Naive thymus-derived CD4-positive, alpha-beta T cell (primary cell): ENCODE measurements at regions of chr19 and their contacts with region 1.

Region 1: GRCh38 chr19:1189419-1189818 is 15.4 kb upstream of the SBNO2 start:
- DNase-seq: peak in 1 of 9 donors; percentile 67
- ATAC-seq: peak; percentile 57
- H3K4me3 ChIP-seq: no peak overlapping the region
- H3K4me3 Mint-ChIP-seq: peak overlapping the region in 5 of 10 donors; percentile 33 to 63 (median 58)
- H3K27ac ChIP-seq: no peak overlapping the region
- H3K27ac Mint-ChIP-seq: peak overlapping the region; percentile 44 to 94 (median 79)
- H3K4me1 ChIP-seq: peaks cover 21 to 25% of the 10 kb centered on the region in 2 donors
- H3K4me1 Mint-ChIP-seq: peaks cover 11 to 27% (median 18%) of the 10 kb centered on the region in 7 donors
- H3K27me3 ChIP-seq: no peaks in the 10 kb centered on the region
- H3K27me3 Mint-ChIP-seq: no peaks in the 10 kb centered on the region

Region 2: DNA sequence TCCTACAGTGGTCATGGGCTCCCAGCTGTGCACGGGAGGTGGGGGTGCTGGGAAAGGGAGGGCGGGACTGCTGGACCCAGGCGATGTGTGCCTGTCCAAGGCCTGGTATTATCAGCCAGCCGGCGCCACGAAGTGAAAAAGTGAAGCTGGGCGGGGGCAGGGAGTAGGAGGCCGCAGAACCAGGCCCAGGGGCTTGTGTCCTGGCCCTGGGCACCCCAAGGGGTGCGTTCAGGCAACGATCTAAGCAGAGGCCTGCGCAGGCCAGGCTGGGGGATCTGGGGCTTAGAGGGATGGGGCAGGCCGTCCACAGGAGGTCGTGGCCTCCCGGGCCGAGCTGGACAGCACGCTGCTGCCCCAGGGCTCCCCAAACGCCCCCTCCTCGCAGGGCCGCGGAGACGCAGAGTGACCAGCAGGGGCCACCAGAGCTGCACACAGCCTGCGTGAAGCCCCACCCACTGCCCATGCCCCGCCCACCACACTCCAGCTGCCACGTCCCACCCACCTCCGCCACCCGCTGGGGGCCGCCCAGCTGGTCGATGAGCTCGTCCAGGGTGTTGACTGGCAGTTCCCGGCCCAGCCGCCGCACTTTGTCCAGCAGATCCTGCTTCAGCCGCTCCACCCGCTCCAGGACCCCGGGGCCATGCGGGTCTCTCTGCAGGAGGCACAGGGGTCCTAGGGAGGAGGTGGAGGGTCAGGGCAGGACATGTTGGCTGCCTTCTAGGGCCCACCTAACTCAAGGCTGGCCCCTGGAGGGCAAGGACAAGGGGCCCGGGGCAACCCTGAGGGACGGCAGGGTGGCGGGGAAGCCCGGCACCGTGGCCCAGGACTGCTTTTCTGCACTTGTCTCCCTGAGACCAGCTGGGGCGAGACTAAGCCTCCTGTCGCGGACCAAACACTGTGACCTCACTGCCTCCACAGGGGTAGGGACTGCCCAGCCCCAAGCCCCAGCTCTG is 76.1 kb before region 1 on chr19:
- CTCF ChIA-PET with region 1: interaction called, 37 read pairs
- POLR2A ChIA-PET with region 1: interaction called, 27 read pairs
- intact Hi-C with region 1: loop called (anchors 5 kb)
- DNase-seq: peak; percentile 73 to 86 (median 83)
- ATAC-seq: peak; percentile 94
- H3K4me3 ChIP-seq: no peak overlapping the region
- H3K4me3 Mint-ChIP-seq: no peak overlapping the region
- H3K27ac ChIP-seq: peak overlapping the region; percentile 59
- H3K27ac Mint-ChIP-seq: peak overlapping the region in 3 of 9 donors; percentile 36 to 77 (median 74)
- H3K4me1 ChIP-seq: peaks cover 0 to 8% of the 10 kb centered on the region in 2 donors
- H3K4me1 Mint-ChIP-seq: peaks cover 0 to 2% (median 0%) of the 10 kb centered on the region in 7 donors
- H3K27me3 ChIP-seq: no peaks in the 10 kb centered on the region
- H3K27me3 Mint-ChIP-seq: no peaks in the 10 kb centered on the region

Region 3: DNA sequence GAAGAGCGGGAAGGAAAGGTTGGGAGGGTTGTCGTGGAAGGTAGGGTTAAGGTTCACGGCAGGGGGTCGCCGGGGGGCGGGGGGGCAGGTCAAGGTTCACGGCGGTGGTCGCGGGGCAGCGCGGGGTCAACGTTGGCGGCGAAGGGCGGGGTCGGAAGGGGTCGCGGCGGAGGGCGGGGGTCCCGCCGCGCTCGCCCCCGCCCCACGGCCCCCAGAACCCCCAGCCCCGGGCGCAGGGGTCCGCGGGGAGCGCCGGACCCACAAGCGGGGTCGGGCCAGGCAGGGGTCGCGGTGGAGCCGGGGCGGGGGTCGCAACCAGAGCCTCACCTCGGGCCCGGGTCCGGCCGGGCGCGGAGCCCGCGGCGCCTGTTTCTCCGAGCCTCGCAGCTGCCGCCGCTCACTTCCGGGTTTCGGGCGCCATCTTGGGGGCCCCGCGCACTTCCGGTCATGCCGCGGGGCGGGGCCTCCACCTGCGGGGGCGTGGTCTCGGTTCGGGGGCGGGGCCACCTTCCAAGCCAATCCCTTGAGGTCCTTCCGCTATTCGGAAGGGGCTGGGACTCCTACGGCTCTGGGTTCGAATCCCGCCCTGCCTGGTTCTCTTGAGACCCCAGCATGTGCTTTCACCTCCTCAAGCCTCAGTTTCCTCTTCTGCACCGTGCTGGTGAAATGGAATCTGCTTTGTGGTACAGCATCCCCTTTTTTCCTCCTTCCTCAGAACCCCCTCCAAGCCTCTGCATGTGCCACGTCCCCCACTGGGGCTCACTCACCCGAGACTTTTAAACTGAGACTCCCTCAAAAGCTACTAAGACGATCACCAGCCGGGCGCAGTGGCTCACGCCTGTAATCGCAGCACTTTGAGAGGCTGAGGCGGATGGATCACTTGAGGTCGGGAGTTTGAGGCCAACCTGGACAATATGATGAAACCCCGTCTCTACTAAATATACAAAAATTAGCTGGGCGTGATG is 15.3 kb before region 1 on chr19 and contains the start of gene SBNO2:
- CTCF ChIA-PET with region 1: interaction called, 6 read pairs
- POLR2A ChIA-PET with region 1: interaction called, 14 read pairs
- intact Hi-C with region 1: loop called in 1 of 2 experiments (anchors 1 kb)
- DNase-seq: peak; percentile 74 to 98 (median 85)
- ATAC-seq: peak; percentile 96
- H3K4me3 ChIP-seq: peak within 1 kb of the TSS; percentile 77
- H3K4me3 Mint-ChIP-seq: peak within 1 kb of the TSS; percentile 80 to 94 (median 88)
- H3K27ac ChIP-seq: peak within 1 kb of the TSS; percentile 87
- H3K27ac Mint-ChIP-seq: peak within 1 kb of the TSS; percentile 89 to 97 (median 94)
- H3K4me1 ChIP-seq: peaks cover 3 to 17% of the 10 kb centered on the region in 2 donors
- H3K4me1 Mint-ChIP-seq: peaks cover 16 to 43% (median 32%) of the 10 kb centered on the region in 7 donors
- H3K27me3 ChIP-seq: no peaks in the 10 kb centered on the region
- H3K27me3 Mint-ChIP-seq: peaks cover 0 to 2% (median 0%) of the 10 kb centered on the region in 5 donors
- total RNA-seq, gene SBNO2: 88.6 to 137 (median 104) TPM

Region 4: DNA sequence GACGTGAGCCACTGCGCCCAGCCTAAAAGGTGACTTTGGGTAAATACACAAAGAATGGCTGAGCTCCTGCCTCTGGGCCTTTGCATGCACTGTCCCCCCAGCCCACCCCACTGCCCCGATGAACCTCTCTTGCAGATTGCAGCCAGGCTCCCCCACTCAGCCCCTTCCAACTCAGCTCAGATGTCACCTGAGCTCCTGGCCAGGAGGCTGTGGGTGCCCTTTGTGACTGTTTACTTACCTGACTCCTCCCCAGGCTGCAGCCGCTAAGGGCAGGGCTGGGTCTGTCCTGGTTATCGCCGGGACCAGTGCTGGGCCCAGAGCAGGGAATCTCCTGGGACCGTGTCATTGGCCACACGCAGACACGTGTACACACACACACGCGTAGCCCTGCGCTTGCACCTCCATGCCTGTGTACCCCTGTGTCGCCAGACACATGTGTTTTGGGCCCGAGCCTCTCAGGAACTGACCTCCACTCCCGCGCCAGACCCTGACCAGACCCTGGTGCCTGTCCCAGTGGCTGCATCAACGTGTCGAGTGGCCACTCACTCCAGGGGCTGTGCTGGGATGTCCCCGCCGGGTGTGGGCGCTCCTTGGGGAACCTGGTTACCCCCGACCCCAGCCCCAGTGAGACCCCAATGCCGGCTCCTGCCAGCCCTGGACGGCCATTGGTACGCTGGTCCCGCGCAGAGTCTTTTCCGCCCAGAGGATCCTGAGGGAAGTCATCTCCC is 114.9 kb after region 1 on chr19:
- CTCF ChIA-PET with region 1: no interaction called
- POLR2A ChIA-PET with region 1: no interaction called
- intact Hi-C with region 1: no loop called
- DNase-seq: no peak
- ATAC-seq: no peak
- H3K4me3 ChIP-seq: no peak overlapping the region
- H3K4me3 Mint-ChIP-seq: no peak overlapping the region
- H3K27ac ChIP-seq: no peak overlapping the region
- H3K27ac Mint-ChIP-seq: no peak overlapping the region
- H3K4me1 ChIP-seq: no peaks in the 10 kb centered on the region
- H3K4me1 Mint-ChIP-seq: peaks cover 0 to 2% (median 0%) of the 10 kb centered on the region in 7 donors
- H3K27me3 ChIP-seq: no peaks in the 10 kb centered on the region
- H3K27me3 Mint-ChIP-seq: no peaks in the 10 kb centered on the region

Region 5: GRCh38 chr19:1577090-1577928 is 387.9 kb after region 1 on chr19:
- CTCF ChIA-PET with region 1: no interaction called
- POLR2A ChIA-PET with region 1: no interaction called
- intact Hi-C with region 1: no loop called
- DNase-seq: no peak
- ATAC-seq: no peak
- H3K4me3 ChIP-seq: no peak overlapping the region
- H3K4me3 Mint-ChIP-seq: no peak overlapping the region
- H3K27ac ChIP-seq: no peak overlapping the region
- H3K27ac Mint-ChIP-seq: no peak overlapping the region
- H3K4me1 ChIP-seq: no peaks in the 10 kb centered on the region
- H3K4me1 Mint-ChIP-seq: peaks cover 0 to 5% (median 0%) of the 10 kb centered on the region in 7 donors
- H3K27me3 ChIP-seq: no peaks in the 10 kb centered on the region
- H3K27me3 Mint-ChIP-seq: no peaks in the 10 kb centered on the region